Activated CD4-positive, alpha-beta T cell treated with anti-CD3 and anti-CD28 coated beads, Interleukin-2, amount 10 ng/mL, durations not matched to agents 24 days and 14 days (primary cell): ENCODE measurements at regions of chrX and their contacts with region 1.

Region 1: DNA sequence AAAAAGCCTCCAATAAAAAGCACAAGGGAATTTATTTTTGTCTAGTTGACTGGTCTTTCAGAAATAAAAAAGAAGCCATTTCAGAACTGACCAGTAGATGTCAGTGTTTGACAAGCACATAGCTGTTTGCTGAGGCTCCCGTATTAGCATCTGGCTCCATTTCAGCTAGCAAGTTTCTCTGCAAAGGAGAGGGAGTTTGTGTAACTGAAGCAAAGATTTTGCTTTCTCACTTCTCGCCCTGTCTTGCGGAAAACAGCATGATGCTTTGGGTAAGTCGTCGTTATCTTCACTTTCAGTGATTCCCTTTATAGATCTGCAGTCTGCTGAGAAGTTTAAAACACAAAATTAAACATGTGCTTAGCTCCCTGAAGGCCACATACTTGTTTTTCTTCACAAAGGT is 85.5 kb downstream of the CT47B1 start:
- DNase-seq: peak; percentile 77
- H3K4me3 Mint-ChIP-seq: peak overlapping the region; percentile 67
- H3K27ac Mint-ChIP-seq: peak overlapping the region; percentile 87
- H3K4me1 Mint-ChIP-seq: peaks cover 15% of the 10 kb centered on the region
- H3K27me3 Mint-ChIP-seq: no peaks in the 10 kb centered on the region

Region 2: GRCh38 chrX:119706616-119707015 is 1083.5 kb before region 1 on chrX:
- intact Hi-C with region 1: no loop called
- DNase-seq: no peak
- H3K4me3 Mint-ChIP-seq: no peak overlapping the region
- H3K27ac Mint-ChIP-seq: no peak overlapping the region
- H3K4me1 Mint-ChIP-seq: peaks cover 4% of the 10 kb centered on the region
- H3K27me3 Mint-ChIP-seq: peaks cover 5% of the 10 kb centered on the region

Region 3: DNA sequence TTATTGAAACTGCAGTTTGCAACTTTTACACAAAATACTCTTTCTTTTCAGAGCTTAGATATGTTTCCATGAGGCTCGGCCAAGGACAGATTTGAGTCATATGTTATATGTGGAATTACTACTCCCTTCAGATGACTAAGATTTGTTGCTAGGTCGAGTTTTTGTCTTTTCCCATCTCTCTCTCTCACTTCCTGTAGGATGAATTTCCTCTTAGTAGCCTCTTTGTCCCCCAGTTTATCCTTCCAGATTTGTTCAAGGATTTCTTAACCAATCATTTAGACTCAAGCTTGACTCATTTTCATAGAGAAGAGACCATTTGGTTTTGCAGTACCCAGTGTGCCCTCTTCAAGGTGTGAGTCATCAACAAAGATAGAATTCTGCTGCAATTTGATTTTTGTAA is 466.5 kb after region 1 on chrX:
- intact Hi-C with region 1: loop called (anchors 1 kb)
- DNase-seq: no peak
- H3K4me3 Mint-ChIP-seq: no peak overlapping the region
- H3K27ac Mint-ChIP-seq: peak overlapping the region; percentile 75
- H3K4me1 Mint-ChIP-seq: peaks cover 5% of the 10 kb centered on the region
- H3K27me3 Mint-ChIP-seq: no peaks in the 10 kb centered on the region

Region 4: DNA sequence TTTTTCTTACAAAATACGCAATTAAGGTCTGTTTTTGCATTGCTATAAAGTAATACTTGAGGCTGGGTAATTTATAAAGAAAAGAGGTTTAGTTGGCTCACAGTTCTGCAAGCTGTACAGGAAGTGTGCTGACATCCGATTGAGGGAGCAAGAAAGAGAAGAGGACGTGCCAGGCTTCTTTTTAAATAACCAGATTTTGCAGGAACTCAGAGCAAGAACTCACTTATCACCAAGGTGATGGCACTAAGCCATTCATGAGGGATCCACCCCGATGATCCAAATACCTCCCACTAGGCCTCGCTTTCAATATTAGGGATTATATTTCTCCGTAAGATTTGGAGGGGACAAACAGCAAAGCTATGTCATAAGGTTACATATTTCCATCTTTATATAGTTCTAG is 714.0 kb after region 1 on chrX:
- intact Hi-C with region 1: loop called (anchors 10 kb)
- DNase-seq: peak; percentile 52
- H3K4me3 Mint-ChIP-seq: no peak overlapping the region
- H3K27ac Mint-ChIP-seq: no peak overlapping the region
- H3K4me1 Mint-ChIP-seq: no peaks in the 10 kb centered on the region
- H3K27me3 Mint-ChIP-seq: no peaks in the 10 kb centered on the region

Region 5: DNA sequence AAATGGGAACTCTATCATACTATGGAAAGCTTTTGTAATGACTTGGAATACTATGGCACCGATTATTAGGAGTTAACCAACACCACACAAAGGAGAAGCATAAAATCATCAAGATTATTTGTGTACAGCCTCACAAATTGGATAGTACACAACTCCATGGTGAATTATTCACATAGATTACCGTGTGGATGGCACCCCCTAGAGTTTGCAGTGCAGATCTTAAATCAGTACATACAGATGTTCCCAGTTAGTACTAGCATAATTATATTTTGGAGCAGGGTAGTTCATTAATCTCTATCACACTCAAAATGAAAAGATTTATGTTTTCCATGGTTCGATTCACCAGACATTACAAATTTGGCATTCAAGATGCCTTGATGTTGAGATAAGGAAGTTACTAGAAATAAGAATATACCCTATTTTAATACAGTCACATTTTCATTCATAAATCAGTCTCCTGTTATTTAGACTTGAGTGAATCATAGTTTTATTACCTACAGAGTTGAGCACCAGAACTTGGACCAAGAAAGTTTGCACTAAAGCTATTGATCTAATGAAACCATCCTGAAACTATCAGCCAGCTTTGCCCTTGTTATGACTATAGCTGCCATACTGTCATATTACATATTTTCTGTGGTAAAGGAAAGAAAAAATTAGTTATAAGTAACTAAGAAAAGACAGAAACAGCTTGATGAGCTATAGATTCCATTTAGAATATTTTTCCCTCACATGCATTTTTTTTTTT is 789.1 kb after region 1 on chrX:
- intact Hi-C with region 1: loop called (anchors 2 kb)
- DNase-seq: peak; percentile 54
- H3K4me3 Mint-ChIP-seq: no peak overlapping the region
- H3K27ac Mint-ChIP-seq: no peak overlapping the region
- H3K4me1 Mint-ChIP-seq: no peaks in the 10 kb centered on the region
- H3K27me3 Mint-ChIP-seq: no peaks in the 10 kb centered on the region